HEK293T (cell line): ENCODE measurements at regions of chr15 and their contacts with region 1.

Region 1: GRCh38 chr15:74382004-74382816 is 14.8 kb upstream of the CYP11A1 start:
- DNase-seq: peak; percentile 94

Region 2: DNA sequence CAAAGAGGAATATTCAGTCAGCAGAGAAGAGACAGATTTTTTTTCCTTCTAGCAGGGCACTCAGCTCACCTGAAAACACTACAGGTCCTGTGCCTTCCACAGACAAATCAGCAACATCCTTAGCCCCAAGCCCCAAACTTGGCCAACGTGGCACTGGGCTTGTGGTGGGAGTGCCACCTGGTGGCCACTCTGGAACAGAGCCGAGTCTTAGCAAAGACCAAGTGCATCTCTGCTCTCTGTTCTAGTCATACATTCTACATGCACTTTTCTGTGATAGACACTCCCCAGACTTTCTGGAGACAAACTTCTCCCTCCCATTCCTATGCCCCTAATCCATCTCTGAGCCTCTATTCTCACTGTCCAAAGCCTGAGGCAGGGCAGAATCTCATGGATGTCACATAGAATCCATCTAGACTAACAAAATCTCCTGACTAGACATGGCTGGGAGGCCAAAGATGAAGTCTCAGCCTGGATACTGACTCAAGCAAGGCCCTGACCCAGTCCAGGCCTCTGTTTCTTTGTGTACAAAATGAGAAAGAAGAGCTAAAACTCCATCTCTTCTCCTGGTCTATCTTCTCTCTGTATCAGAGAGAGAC is 56.6 kb after region 1 on chr15:
- CTCF ChIA-PET with region 1: interaction called, 19 read pairs
- POLR2A ChIA-PET with region 1: interaction called, 4 read pairs
- DNase-seq: peak; percentile 85